ENCODE measurements at regions of chr6 and their contacts with region 1.

Region 1: DNA sequence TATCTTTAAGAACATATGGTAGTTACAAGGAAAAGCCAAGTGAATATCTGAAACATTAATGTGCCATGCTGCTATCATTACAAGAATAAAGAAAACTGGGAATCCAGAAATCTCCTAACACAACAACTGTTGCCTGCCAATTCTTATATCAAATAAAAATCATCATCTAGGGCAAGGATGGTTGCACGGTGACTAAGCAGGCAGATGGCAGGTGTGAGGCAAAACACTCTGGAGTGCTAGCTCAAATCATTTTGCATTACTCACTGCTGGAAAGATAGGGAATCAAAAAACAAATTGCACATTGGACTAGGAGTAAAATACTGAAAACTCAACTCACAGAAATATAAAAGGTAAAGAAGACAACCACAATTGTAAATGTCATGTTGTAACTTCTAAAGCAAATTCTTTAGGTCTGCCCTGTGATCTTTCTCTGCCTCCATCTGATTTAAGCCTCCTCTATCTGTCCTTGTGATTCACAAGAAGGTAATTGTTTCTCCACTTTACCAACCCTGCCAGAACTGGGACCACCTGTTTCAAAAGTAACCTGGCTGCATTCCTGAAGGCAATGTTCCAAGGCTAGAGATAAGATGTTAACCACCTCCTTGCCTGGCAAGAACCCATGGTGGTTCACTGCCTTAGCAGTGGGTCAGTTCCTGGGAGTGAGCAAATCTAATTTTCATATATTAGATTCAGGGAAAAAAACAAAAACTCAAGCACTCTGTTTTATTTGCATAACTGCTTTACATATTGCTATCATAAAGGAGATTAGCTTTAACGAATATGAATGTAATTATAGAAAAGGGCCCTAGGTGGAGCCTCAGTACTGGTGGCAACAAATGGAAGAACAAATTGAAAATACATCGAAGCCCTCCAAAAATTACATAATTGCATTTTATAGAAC is 33.1 kb upstream of the LCA5 start:
- DNase-seq: no peak
- H3K4me3 Mint-ChIP-seq: no peak overlapping the region
- H3K27ac Mint-ChIP-seq: no peak overlapping the region
- H3K4me1 Mint-ChIP-seq: no peaks in the 10 kb centered on the region
- H3K27me3 Mint-ChIP-seq: peaks cover 7% of the 10 kb centered on the region

Region 2: GRCh38 chr6:79525272-79526100 is 44.9 kb before region 1 on chr6:
- intact Hi-C with region 1: no loop called
- DNase-seq: no peak
- H3K4me3 Mint-ChIP-seq: no peak overlapping the region
- H3K27ac Mint-ChIP-seq: no peak overlapping the region
- H3K4me1 Mint-ChIP-seq: no peaks in the 10 kb centered on the region
- H3K27me3 Mint-ChIP-seq: no peaks in the 10 kb centered on the region

Region 3: DNA sequence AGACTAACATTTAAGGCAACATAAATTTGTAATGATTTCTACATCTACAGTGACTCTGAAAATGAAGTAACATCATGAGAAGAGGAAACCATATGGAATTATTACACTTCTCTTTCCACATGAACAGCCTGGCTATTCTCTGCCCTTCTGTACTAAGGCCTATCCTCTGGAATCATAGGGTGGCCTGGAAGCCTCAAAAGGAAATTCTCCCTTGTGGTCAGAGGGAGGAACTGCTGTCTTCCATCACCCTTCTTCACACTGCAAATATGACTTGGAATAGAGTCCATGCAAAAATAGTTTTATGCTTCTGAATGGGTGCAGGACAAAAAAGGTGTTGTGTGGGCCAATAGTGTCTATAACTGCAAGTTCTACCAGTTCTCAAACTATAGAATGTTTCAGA is 16.2 kb after region 1 on chr6:
- intact Hi-C with region 1: no loop called
- DNase-seq: no peak
- H3K4me3 Mint-ChIP-seq: no peak overlapping the region
- H3K27ac Mint-ChIP-seq: no peak overlapping the region
- H3K4me1 Mint-ChIP-seq: no peaks in the 10 kb centered on the region
- H3K27me3 Mint-ChIP-seq: peaks cover 2% of the 10 kb centered on the region

Region 4: DNA sequence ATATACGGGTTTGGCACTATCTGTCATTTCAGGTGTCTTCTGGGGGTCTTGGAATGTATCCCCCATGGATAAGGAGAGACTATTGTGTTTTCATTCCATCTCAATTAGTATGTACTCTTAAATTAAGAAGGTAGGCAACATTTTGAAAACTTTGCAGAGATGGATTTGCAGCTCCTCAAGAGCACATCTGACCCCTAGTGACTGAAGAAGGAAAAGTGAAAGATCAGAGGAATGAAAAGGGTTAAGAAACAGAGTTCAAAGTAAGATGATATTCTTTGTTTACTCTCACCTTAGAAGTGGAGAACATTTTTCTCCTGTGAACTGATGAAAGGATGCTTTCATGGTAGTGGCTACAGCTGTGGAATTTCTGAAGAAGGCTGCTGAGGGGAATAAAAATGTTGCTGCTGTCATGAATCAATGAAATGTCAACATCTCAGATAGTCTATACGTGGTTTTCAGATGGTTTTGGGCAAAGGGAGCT is 102.3 kb after region 1 on chr6:
- intact Hi-C with region 1: loop called (anchors 1 kb)
- DNase-seq: no peak
- H3K4me3 Mint-ChIP-seq: no peak overlapping the region
- H3K27ac Mint-ChIP-seq: no peak overlapping the region
- H3K4me1 Mint-ChIP-seq: peaks cover 15% of the 10 kb centered on the region
- H3K27me3 Mint-ChIP-seq: peaks cover 2% of the 10 kb centered on the region

Region 5: GRCh38 chr6:79713701-79714322 is 143.4 kb after region 1 on chr6:
- intact Hi-C with region 1: loop called (anchors 2 kb)
- DNase-seq: peak; percentile 77
- H3K4me3 Mint-ChIP-seq: no peak overlapping the region
- H3K27ac Mint-ChIP-seq: no peak overlapping the region
- H3K4me1 Mint-ChIP-seq: no peaks in the 10 kb centered on the region
- H3K27me3 Mint-ChIP-seq: peaks cover 2% of the 10 kb centered on the region

Region 6: GRCh38 chr6:79813854-79814709 is 243.7 kb after region 1 on chr6:
- intact Hi-C with region 1: loop called (anchors 5 kb)
- DNase-seq: peak; percentile 86
- H3K4me3 Mint-ChIP-seq: no peak overlapping the region
- H3K27ac Mint-ChIP-seq: no peak overlapping the region
- H3K4me1 Mint-ChIP-seq: no peaks in the 10 kb centered on the region
- H3K27me3 Mint-ChIP-seq: peaks cover 12% of the 10 kb centered on the region